Activated CD8-positive, alpha-beta memory T cell treated with anti-CD3 and anti-CD28 coated beads, Interleukin-2, amount 10 ng/mL, durations not matched to agents 7 days and 5 days (primary cell): ENCODE measurements at regions of chr9 and their contacts with region 1.

Region 1: GRCh38 chr9:92140074-92140753 is 25.0 kb upstream of the SPTLC1 start:
- DNase-seq: peak; percentile 82
- ATAC-seq: peak; percentile 71
- H3K4me3 Mint-ChIP-seq: no peak overlapping the region
- H3K27ac Mint-ChIP-seq: no peak overlapping the region
- H3K4me1 Mint-ChIP-seq: peaks cover 10% of the 10 kb centered on the region
- H3K27me3 Mint-ChIP-seq: peaks cover 37% of the 10 kb centered on the region

Region 2: GRCh38 chr9:92010705-92011536 is 129.3 kb before region 1 on chr9:
- CTCF ChIA-PET with region 1: no interaction called
- DNase-seq: no peak
- ATAC-seq: no peak
- H3K4me3 Mint-ChIP-seq: no peak overlapping the region
- H3K27ac Mint-ChIP-seq: no peak overlapping the region
- H3K4me1 Mint-ChIP-seq: no peaks in the 10 kb centered on the region
- H3K27me3 Mint-ChIP-seq: peaks cover 24% of the 10 kb centered on the region

Region 3: DNA sequence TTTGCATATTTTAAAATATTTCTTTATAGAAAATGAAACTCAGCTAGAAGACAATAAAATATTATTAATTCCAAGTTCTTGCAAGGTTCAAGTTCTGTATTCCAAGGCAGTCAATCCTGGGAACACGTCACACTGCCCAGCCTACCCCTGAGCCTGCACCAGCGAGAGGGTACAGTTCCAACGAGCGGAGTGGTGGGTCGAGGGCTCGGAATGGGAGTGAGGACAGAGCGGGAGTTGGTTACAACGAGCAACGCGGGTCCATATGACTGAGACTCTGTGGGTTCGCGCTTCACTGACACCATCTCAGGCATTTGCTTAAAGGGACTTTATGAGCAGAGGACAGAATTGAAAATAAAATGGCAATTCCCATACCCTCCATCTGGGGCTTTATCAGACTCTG is 15.0 kb after region 1 on chr9:
- CTCF ChIA-PET with region 1: interaction called, 16 read pairs
- DNase-seq: no peak
- ATAC-seq: no peak
- H3K4me3 Mint-ChIP-seq: no peak overlapping the region
- H3K27ac Mint-ChIP-seq: no peak overlapping the region
- H3K4me1 Mint-ChIP-seq: peaks cover 12% of the 10 kb centered on the region
- H3K27me3 Mint-ChIP-seq: peaks cover 29% of the 10 kb centered on the region

Region 4: DNA sequence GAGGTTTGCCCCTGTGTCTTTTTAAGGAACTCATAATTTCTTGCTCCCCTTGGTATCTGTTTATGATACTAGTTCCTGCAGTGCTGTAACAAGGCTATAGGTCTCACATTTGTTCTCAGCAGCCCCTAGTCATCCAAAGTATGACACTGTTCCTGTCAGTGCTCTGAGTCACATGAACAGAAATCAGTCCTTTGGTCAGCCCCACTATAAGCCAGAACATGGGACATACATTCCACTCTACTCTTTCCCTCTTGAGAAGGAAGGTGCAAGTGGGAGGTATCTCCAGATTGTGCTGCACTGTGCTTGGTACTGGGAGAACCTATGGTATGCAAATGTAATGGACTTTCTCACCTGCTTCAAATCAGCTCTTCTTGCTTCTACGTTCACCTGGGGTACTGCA is 66.3 kb after region 1 on chr9:
- CTCF ChIA-PET with region 1: interaction called, 12 read pairs
- DNase-seq: no peak
- ATAC-seq: no peak
- H3K4me3 Mint-ChIP-seq: no peak overlapping the region
- H3K27ac Mint-ChIP-seq: no peak overlapping the region
- H3K4me1 Mint-ChIP-seq: no peaks in the 10 kb centered on the region
- H3K27me3 Mint-ChIP-seq: no peaks in the 10 kb centered on the region

Region 5: GRCh38 chr9:92242260-92243136 is 102.3 kb after region 1 on chr9:
- CTCF ChIA-PET with region 1: interaction called, 50 read pairs
- DNase-seq: no peak
- ATAC-seq: no peak
- H3K4me3 Mint-ChIP-seq: no peak overlapping the region
- H3K27ac Mint-ChIP-seq: no peak overlapping the region
- H3K4me1 Mint-ChIP-seq: peaks cover 3% of the 10 kb centered on the region
- H3K27me3 Mint-ChIP-seq: no peaks in the 10 kb centered on the region

Region 6: DNA sequence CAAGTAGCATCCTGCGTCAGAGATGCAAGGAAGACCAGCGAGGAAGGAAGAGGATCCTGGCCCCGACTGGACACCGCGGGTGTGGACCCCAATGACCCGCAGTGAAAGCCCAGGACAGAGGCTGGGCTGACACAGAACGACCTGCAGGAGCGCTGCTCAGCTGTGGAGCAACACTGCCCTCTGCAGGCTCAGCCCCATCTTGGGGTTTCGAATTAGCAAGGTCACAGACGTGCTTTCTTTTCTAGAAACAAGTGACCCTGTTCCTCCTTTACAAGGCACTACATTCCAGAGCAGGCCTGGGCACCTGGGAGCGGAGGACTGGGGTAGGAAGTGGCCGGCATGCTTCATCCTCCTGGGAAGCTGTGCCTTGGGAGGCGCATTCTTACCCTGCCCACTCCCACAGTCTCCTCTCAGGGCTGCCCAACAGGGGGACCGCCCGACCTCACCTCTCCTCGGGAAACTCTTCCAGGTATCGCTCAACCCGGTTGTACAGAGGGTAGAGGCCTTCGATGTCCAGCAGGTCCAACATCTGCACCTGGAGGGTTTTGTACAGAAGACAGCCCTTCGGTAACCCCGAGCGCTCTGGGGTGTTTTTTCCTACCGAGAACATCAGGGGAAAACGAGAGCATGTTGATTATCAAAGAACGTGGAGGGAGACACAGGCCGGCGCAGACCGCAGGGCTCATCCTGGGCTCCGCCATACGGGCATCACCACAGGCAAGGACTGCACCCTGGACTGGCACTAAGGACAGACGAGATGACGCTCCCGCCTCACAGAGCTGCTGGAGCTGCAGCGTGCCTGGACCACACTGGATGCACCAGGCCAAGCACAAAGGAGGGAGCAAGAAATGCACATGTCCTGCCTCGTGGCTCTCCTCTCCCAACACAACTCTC is 494.7 kb after region 1 on chr9:
- CTCF ChIA-PET with region 1: interaction called, 58 read pairs
- DNase-seq: peak; percentile 81
- ATAC-seq: peak; percentile 73
- H3K4me3 Mint-ChIP-seq: no peak overlapping the region
- H3K27ac Mint-ChIP-seq: no peak overlapping the region
- H3K4me1 Mint-ChIP-seq: peaks cover 13% of the 10 kb centered on the region
- H3K27me3 Mint-ChIP-seq: no peaks in the 10 kb centered on the region

Region 7: GRCh38 chr9:92790542-92791527 is 650.6 kb after region 1 on chr9:
- CTCF ChIA-PET with region 1: interaction called, 40 read pairs
- DNase-seq: peak; percentile 84
- ATAC-seq: peak; percentile 96
- H3K4me3 Mint-ChIP-seq: peak overlapping the region; percentile 7
- H3K27ac Mint-ChIP-seq: no peak overlapping the region
- H3K4me1 Mint-ChIP-seq: peaks cover 12% of the 10 kb centered on the region
- H3K27me3 Mint-ChIP-seq: peaks cover 20% of the 10 kb centered on the region